GM12878 (cell line): ENCODE measurements at regions of chr6 and their contacts with region 1.

Region 1: GRCh38 chr6:44064089-44064947 is 62.9 kb downstream of the MRPL14 start:
- DNase-seq: no peak
- ATAC-seq: peak; percentile 77
- H3K4me3 ChIP-seq: no peak overlapping the region
- H3K27ac ChIP-seq: no peak overlapping the region
- H3K4me1 ChIP-seq: peaks cover 44% of the 10 kb centered on the region
- H3K27me3 ChIP-seq: no peaks in the 10 kb centered on the region
- CTCF ChIP-seq: no peak
- EP300 ChIP-seq: no peak
- POLR2A ChIP-seq: no peak
- RAD21 ChIP-seq: no peak

Region 2: DNA sequence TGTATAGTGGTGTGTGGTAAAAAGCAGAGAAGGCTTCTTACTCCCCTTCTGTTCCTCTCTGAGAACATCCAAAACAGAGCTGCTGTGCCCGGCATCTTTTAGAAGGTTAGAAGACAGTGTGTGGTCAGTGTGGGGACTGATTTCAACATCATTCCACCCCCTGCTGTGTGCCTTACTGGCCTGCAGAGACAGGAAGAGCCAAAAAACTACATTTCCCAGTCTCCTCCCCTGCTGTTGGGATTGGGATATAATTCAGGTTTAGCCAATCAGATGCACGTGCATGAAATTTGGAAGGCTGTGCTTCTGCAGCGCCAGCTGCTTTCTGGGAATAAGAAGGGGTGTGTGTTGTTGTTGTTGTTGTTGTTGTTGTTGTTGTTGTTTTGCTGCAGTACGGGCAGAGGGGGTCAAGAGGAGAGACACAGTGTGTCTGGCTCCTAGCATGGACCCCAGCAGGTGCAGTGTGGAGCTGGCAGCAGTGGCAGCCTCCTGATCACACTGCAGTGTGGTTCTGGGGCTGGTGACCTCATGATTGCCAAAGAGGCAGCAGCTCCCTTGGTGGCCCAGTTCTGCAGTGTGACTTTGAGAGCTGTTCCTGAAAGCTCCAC is 11.8 kb before region 1 on chr6:
- CTCF ChIA-PET with region 1: interaction called, 4 read pairs
- POLR2A ChIA-PET with region 1: interaction called, 3 read pairs
- RAD21 ChIA-PET with region 1: interaction called, 3 read pairs
- SMC1A ChIA-PET with region 1: interaction called, 18 read pairs
- in situ Hi-C with region 1: no loop called
- intact Hi-C with region 1: no loop called
- DNase-seq: no peak
- ATAC-seq: peak; percentile 29
- H3K4me3 ChIP-seq: no peak overlapping the region
- H3K27ac ChIP-seq: no peak overlapping the region
- H3K4me1 ChIP-seq: peaks cover 13% of the 10 kb centered on the region
- H3K27me3 ChIP-seq: no peaks in the 10 kb centered on the region
- CTCF ChIP-seq: no peak
- EP300 ChIP-seq: no peak
- POLR2A ChIP-seq: no peak
- RAD21 ChIP-seq: no peak

Region 3: DNA sequence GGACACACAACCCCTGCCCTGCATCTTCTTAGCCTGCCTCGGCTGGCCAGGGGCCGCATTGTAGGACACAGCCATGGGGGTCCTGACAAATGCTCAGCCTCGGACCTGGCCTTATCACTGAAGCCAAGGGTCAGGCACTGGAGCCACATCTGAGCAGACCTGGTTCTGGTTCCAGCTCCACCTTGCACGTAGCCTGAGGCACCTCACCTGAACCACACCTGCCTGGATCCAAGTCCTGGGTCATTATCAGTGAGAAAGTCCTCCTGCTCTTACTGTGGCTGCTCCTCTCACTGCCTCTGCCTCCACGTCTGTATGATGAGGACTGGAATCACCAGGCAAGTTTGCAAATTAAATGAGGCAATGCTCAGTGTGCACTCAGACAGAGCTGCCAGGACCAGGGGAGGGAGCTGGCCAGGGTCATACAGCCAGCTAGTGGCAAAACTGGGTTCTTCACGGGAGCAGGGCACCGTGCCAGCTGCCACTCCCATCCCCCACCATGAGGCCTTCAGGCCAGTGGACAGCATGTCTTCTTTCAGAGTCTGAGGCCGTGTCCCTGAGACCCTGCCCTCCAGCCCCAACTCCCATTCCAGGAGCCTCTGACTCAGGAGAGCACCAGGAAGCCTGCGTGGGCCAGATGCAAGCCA is 22.7 kb after region 1 on chr6:
- CTCF ChIA-PET with region 1: no interaction called
- POLR2A ChIA-PET with region 1: no interaction called
- RAD21 ChIA-PET with region 1: no interaction called
- SMC1A ChIA-PET with region 1: no interaction called
- in situ Hi-C with region 1: no loop called
- intact Hi-C with region 1: no loop called
- DNase-seq: no peak
- ATAC-seq: no peak
- H3K4me3 ChIP-seq: no peak overlapping the region
- H3K27ac ChIP-seq: no peak overlapping the region
- H3K4me1 ChIP-seq: no peaks in the 10 kb centered on the region
- H3K27me3 ChIP-seq: no peaks in the 10 kb centered on the region
- CTCF ChIP-seq: no peak
- EP300 ChIP-seq: no peak
- POLR2A ChIP-seq: no peak
- RAD21 ChIP-seq: no peak